B cell (primary cell): ENCODE measurements at regions of chr11 and their contacts with region 1.

Region 1: GRCh38 chr11:113314389-113315301 is at the start of gene TTC12:
- DNase-seq: peak; percentile 94
- ATAC-seq: peak; percentile 99
- H3K4me3 ChIP-seq: peak within 1 kb of the TSS; percentile 53 to 89 (median 67)
- H3K4me3 Mint-ChIP-seq: peak within 1 kb of the TSS; percentile 82
- H3K27ac ChIP-seq: peak within 1 kb of the TSS; percentile 80 to 94
- H3K27ac Mint-ChIP-seq: peak within 1 kb of the TSS; percentile 87
- H3K4me1 ChIP-seq: peaks cover 15 to 20% of the 10 kb centered on the region in 2 donors
- H3K4me1 Mint-ChIP-seq: peaks cover 24% of the 10 kb centered on the region
- H3K27me3 ChIP-seq: no peaks in the 10 kb centered on the region
- H3K27me3 Mint-ChIP-seq: no peaks in the 10 kb centered on the region
- CTCF ChIP-seq: no peak
- total RNA-seq, gene TTC12: 47.3 and 63.8 TPM in 2 replicates

Region 2: DNA sequence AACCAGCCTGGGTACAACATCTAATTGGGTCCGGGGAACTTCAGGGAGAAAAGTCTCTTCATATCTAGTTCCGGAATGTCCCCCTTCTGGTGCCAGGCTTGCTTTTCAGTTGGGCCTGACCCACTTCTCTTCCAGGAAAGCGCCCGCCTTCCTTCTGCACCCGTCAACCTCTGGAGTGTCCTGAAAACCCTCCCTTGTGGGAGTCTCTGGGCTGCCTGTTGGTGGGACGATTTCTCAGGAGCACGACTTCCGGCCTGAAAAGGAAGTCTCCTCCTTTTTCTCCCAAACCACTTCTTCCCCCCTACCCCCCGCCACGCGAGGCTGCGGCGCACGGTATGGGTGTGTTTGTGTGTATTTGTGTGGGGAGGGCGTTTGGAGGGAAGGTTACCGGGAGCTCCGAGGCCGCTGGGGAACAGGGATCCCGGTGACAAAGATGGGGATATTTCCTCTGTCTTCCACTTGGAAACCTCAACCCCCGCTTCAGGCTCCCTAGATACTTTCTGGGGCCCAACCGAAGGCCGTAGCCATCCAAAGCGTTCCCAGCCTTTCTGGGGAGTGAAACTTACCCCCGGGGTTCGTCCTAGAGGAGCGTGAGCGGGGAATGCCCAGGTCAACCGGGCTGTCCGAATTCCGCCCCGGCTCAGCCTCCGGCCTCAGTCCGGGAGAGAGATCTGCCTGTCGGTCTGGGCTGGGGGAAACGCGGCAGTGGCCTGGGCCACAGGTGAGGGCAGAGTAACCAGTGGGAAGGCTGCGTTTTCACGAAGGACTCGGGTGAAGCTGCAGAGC is 1240.4 kb before region 1 on chr11 and contains the start of gene NKAPD1:
- CTCF ChIA-PET with region 1: no interaction called
- POLR2A ChIA-PET with region 1: no interaction called
- intact Hi-C with region 1: loop called (anchors 2 kb)
- DNase-seq: peak; percentile 95
- ATAC-seq: peak; percentile 85
- H3K4me3 ChIP-seq: peak within 1 kb of the TSS; percentile 78 to 98 (median 81)
- H3K4me3 Mint-ChIP-seq: peak within 1 kb of the TSS; percentile 97
- H3K27ac ChIP-seq: peak within 1 kb of the TSS; percentile 53 to 88
- H3K27ac Mint-ChIP-seq: peak within 1 kb of the TSS; percentile 97
- H3K4me1 ChIP-seq: peaks cover 12 to 13% of the 10 kb centered on the region in 2 donors
- H3K4me1 Mint-ChIP-seq: peaks cover 31% of the 10 kb centered on the region
- H3K27me3 ChIP-seq: no peaks in the 10 kb centered on the region
- H3K27me3 Mint-ChIP-seq: peaks cover 3% of the 10 kb centered on the region
- CTCF ChIP-seq: peak; percentile 23
- total RNA-seq, gene NKAPD1: 22.8 and 23.4 TPM in 2 replicates

Region 3: GRCh38 chr11:112280268-112281126 is 1034.1 kb before region 1 on chr11:
- CTCF ChIA-PET with region 1: no interaction called
- POLR2A ChIA-PET with region 1: no interaction called
- intact Hi-C with region 1: loop called (anchors 10 kb)
- DNase-seq: peak; percentile 87
- ATAC-seq: peak; percentile 93
- H3K4me3 ChIP-seq: peak overlapping the region; percentile 59 to 80 (median 69)
- H3K4me3 Mint-ChIP-seq: peak overlapping the region; percentile 98
- H3K27ac ChIP-seq: peak overlapping the region in 1 of 2 donors; percentile 20
- H3K27ac Mint-ChIP-seq: peak overlapping the region; percentile 87
- H3K4me1 ChIP-seq: peaks cover 7 to 15% of the 10 kb centered on the region in 2 donors
- H3K4me1 Mint-ChIP-seq: peaks cover 18% of the 10 kb centered on the region
- H3K27me3 ChIP-seq: no peaks in the 10 kb centered on the region
- H3K27me3 Mint-ChIP-seq: no peaks in the 10 kb centered on the region
- CTCF ChIP-seq: peak; percentile 64

Region 4: DNA sequence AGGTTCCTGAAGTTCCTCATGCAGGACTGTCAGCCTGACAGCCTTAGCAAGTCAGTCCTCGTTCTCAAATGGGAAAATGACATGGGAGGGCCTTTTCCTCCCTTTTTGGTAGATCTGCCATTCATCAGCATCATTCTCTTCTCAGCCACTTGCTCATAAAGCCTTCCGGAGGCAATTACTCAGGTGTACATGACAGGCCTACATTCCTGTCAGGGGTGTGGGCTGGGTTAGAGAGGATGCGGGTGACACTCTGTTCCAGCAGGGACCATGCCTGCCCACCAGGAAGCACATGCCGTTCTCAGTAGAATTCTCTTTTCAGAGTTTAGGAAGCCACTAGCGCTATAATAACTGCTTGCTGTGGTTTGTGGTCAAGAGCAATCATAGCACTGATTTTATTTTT is 48.8 kb after region 1 on chr11:
- CTCF ChIA-PET with region 1: no interaction called
- POLR2A ChIA-PET with region 1: no interaction called
- intact Hi-C with region 1: no loop called
- DNase-seq: no peak
- ATAC-seq: no peak
- H3K4me3 ChIP-seq: no peak overlapping the region
- H3K4me3 Mint-ChIP-seq: no peak overlapping the region
- H3K27ac ChIP-seq: no peak overlapping the region
- H3K27ac Mint-ChIP-seq: no peak overlapping the region
- H3K4me1 ChIP-seq: no peaks in the 10 kb centered on the region
- H3K4me1 Mint-ChIP-seq: no peaks in the 10 kb centered on the region
- H3K27me3 ChIP-seq: no peaks in the 10 kb centered on the region
- H3K27me3 Mint-ChIP-seq: no peaks in the 10 kb centered on the region
- CTCF ChIP-seq: no peak

Region 5: GRCh38 chr11:113773416-113774173 is 458.9 kb after region 1 on chr11 and contains the start of gene ZW10:
- CTCF ChIA-PET with region 1: no interaction called
- POLR2A ChIA-PET with region 1: no interaction called
- intact Hi-C with region 1: loop called (anchors 1 kb)
- DNase-seq: peak; percentile 94
- ATAC-seq: peak; percentile 96
- H3K4me3 ChIP-seq: peak within 1 kb of the TSS; percentile 78 to 99 (median 88)
- H3K4me3 Mint-ChIP-seq: peak within 1 kb of the TSS; percentile 97
- H3K27ac ChIP-seq: peak within 1 kb of the TSS; percentile 55 to 79
- H3K27ac Mint-ChIP-seq: peak within 1 kb of the TSS; percentile 94
- H3K4me1 ChIP-seq: peaks cover 0 to 12% of the 10 kb centered on the region in 2 donors
- H3K4me1 Mint-ChIP-seq: peaks cover 24% of the 10 kb centered on the region
- H3K27me3 ChIP-seq: peaks cover 0 to 2% (median 0%) of the 10 kb centered on the region in 4 experiments
- H3K27me3 Mint-ChIP-seq: peaks cover 9% of the 10 kb centered on the region
- CTCF ChIP-seq: peak; percentile 94
- total RNA-seq, gene ZW10: 11.7 and 11.9 TPM in 2 replicates

Region 6: DNA sequence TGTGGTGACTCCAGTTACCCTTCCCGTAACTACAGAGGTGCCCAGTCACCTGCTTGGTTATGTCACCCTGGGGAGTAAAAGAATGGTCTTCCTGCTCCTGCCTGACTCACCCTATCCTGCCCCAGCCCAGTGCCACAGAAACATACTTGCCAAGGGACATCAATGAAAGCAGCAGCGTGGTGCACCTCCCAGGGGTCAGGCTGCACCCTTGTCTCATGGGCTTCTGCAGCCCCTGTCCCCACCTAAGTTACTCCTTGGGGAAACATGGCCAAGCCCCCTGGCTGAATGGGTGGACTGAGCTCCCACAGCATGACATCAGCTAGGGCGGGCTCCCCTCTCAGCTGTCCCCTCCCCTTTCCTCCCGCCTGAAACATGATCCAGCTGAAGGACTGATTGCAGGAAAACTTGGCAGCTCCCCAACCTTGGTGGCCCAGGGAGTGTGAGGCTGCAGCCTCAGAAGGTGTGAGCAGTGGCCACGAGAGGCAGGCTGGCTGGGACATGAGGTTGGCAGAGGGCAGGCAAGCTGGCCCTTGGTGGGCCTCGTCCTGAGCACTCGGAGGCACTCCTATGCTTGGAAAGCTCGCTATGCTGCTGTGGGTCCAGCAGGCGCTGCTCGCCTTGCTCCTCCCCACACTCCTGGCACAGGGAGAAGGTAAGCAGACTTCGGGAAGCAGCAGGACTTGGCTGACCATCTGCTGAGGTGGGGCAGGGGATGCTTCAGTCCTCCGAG is 660.3 kb after region 1 on chr11 and contains the start of gene HTR3A:
- CTCF ChIA-PET with region 1: no interaction called
- POLR2A ChIA-PET with region 1: no interaction called
- intact Hi-C with region 1: loop called (anchors 5 kb)
- DNase-seq: peak; percentile 16
- ATAC-seq: no peak
- H3K4me3 ChIP-seq: no peak within 1 kb of the TSS
- H3K4me3 Mint-ChIP-seq: peak within 1 kb of the TSS; percentile 48
- H3K27ac ChIP-seq: peak within 1 kb of the TSS in 1 of 2 donors; percentile 29
- H3K27ac Mint-ChIP-seq: peak within 1 kb of the TSS; percentile 91
- H3K4me1 ChIP-seq: peaks cover 56 to 77% of the 10 kb centered on the region in 2 donors
- H3K4me1 Mint-ChIP-seq: peaks cover 66% of the 10 kb centered on the region
- H3K27me3 ChIP-seq: no peaks in the 10 kb centered on the region
- H3K27me3 Mint-ChIP-seq: no peaks in the 10 kb centered on the region
- CTCF ChIP-seq: no peak
- total RNA-seq, gene HTR3A: 13.8 and 16.1 TPM in 2 replicates

Region 7: DNA sequence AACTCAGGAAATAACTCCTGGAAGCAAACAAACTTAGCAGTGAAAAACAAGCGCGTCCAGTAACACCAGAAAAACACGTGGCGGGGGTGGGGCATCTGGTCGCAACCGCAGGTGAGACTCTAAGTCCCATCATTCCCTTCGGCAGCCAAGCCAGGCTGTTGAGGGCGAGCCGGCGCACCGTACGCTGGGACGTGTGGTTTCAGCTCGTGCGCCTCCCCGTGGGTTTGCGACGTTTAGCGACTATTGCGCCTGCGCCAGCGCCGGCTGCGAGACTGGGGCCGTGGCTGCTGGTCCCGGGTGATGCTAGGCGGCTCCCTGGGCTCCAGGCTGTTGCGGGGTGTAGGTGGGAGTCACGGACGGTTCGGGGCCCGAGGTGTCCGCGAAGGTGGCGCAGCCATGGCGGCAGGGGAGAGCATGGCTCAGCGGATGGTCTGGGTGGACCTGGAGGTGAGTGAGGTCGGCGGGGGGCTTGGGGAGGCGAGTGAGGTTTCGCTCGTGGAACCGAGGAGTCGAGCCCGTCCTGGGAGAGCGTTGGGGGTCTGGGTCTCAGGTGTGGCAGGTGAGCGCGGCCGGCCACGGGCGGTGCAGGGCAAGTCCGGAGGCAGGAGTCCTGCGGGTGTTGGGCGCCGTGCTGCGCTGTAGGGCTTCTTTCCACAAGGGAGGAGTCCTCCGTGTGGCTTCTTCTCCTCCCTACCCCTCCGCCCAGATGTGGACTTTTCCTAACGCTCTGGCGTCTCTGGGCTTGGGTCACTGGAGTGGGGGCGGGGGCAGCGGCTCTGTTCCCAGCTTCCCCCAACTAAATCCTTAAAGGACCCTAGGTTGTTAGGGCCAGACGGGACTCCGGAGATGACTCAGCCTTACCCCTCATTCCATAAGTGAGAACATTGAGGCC is 1124.8 kb after region 1 on chr11 and contains the start of gene REXO2:
- CTCF ChIA-PET with region 1: no interaction called
- POLR2A ChIA-PET with region 1: no interaction called
- intact Hi-C with region 1: loop called (anchors 10 kb)
- DNase-seq: peak; percentile 95
- ATAC-seq: peak; percentile 99
- H3K4me3 ChIP-seq: peak within 1 kb of the TSS; percentile 48 to 95 (median 88)
- H3K4me3 Mint-ChIP-seq: peak within 1 kb of the TSS; percentile 99
- H3K27ac ChIP-seq: peak within 1 kb of the TSS in 1 of 2 donors; percentile 75
- H3K27ac Mint-ChIP-seq: peak within 1 kb of the TSS; percentile 92
- H3K4me1 ChIP-seq: peaks cover 12 to 13% of the 10 kb centered on the region in 2 donors
- H3K4me1 Mint-ChIP-seq: peaks cover 25% of the 10 kb centered on the region
- H3K27me3 ChIP-seq: no peaks in the 10 kb centered on the region
- H3K27me3 Mint-ChIP-seq: no peaks in the 10 kb centered on the region
- CTCF ChIP-seq: no peak
- total RNA-seq, gene REXO2: 27.7 and 34.3 TPM in 2 replicates